Activated naive CD4-positive, alpha-beta T cell treated with anti-CD3 and anti-CD28 coated beads, Interleukin-2, amount 10 ng/mL, durations not matched to agents 7 days and 5 days (primary cell): ENCODE measurements at regions of chr1 and their contacts with region 1.

Region 1: DNA sequence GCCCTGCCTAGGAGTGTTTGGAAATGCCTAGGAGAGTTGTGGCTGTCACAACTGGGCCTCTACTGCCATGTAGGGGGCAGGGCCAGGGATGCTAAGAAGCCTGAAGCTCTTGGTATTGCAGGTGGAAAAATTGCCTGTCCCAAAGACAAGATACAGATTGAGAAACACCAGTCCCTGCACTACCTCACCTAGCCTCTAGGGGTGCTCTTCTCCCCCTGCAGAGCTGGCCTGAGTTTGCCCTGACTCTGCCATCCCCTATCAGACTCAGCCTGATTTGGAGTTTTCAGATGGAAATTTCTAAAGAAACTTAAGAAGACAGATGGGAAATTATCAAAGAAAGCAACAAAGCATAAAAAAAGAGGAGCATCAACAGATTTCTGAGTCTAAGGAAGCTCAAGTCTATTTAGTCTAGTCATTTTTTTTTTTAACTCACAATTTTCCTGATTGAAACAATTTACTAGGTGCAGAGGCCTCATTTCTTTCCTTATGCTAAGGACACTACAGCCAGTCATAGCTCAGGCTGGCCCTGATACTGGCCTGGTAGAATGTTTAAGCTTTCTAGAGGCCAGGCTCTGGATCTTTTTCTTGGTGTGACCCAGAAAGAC is 61.4 kb upstream of the LRRN2 start:
- DNase-seq: peak; percentile 69
- H3K4me3 Mint-ChIP-seq: no peak overlapping the region
- H3K27ac Mint-ChIP-seq: no peak overlapping the region
- H3K4me1 Mint-ChIP-seq: no peaks in the 10 kb centered on the region
- H3K27me3 Mint-ChIP-seq: peaks cover 44% of the 10 kb centered on the region

Region 2: GRCh38 chr1:204438628-204439027 is 308.3 kb before region 1 on chr1:
- CTCF ChIA-PET with region 1: no interaction called
- DNase-seq: no peak
- H3K4me3 Mint-ChIP-seq: no peak overlapping the region
- H3K27ac Mint-ChIP-seq: no peak overlapping the region
- H3K4me1 Mint-ChIP-seq: peaks cover under 1% of the 10 kb centered on the region
- H3K27me3 Mint-ChIP-seq: no peaks in the 10 kb centered on the region

Region 3: GRCh38 chr1:204706838-204707509 is 40.0 kb before region 1 on chr1:
- CTCF ChIA-PET with region 1: no interaction called
- DNase-seq: no peak
- H3K4me3 Mint-ChIP-seq: no peak overlapping the region
- H3K27ac Mint-ChIP-seq: no peak overlapping the region
- H3K4me1 Mint-ChIP-seq: peaks cover 21% of the 10 kb centered on the region
- H3K27me3 Mint-ChIP-seq: peaks cover 41% of the 10 kb centered on the region

Region 4: GRCh38 chr1:204731509-204731908 is 15.4 kb before region 1 on chr1:
- CTCF ChIA-PET with region 1: interaction called, 13 read pairs
- DNase-seq: no peak
- H3K4me3 Mint-ChIP-seq: no peak overlapping the region
- H3K27ac Mint-ChIP-seq: no peak overlapping the region
- H3K4me1 Mint-ChIP-seq: no peaks in the 10 kb centered on the region
- H3K27me3 Mint-ChIP-seq: peaks cover 37% of the 10 kb centered on the region

Region 5: GRCh38 chr1:204769997-204770396 is 23.1 kb after region 1 on chr1:
- CTCF ChIA-PET with region 1: no interaction called
- DNase-seq: no peak
- H3K4me3 Mint-ChIP-seq: no peak overlapping the region
- H3K27ac Mint-ChIP-seq: no peak overlapping the region
- H3K4me1 Mint-ChIP-seq: no peaks in the 10 kb centered on the region
- H3K27me3 Mint-ChIP-seq: peaks cover 63% of the 10 kb centered on the region